KBM-7 (cell line): ENCODE measurements at regions of chr15 and their contacts with region 1.

Region 1: GRCh38 chr15:35289024-35289617 is 204.0 kb upstream of the NANOGP8 start:
- DNase-seq: peak; percentile 42

Region 2: GRCh38 chr15:35444557-35445204 is 155.6 kb after region 1 on chr15:
- in situ Hi-C with region 1: loop called (anchors 25 kb)
- DNase-seq: peak; percentile 54

Region 3: GRCh38 chr15:35458176-35458856 is 169.2 kb after region 1 on chr15:
- in situ Hi-C with region 1: no loop called
- DNase-seq: no peak